Natural killer cell (primary cell): ENCODE measurements at regions of chr11 and their contacts with region 1.

Region 1: DNA sequence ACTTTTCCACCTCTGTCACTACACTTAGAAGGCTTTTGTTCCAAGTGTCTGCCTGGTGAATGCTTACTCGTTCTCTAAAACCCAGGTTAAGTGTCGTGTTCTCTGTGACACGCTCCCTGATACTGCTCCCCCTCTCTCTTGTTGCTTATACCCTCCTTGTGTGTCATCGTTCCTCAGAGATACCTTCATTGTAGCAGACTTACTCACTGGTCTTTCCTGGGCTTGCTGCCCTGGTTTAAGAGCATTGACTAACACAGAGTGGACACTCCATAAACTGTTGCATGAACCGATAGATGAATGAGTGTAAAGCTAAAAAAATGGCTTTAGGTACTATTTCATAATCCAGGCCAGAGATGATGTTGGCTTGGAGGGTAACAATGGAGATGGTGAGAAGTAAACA is 171.3 kb downstream of the GRIK4 start:
- DNase-seq: no peak
- ATAC-seq: no peak
- H3K4me3 ChIP-seq: no peak overlapping the region
- H3K4me3 Mint-ChIP-seq: no peak overlapping the region
- H3K27ac ChIP-seq: no peak overlapping the region
- H3K27ac Mint-ChIP-seq: no peak overlapping the region
- H3K4me1 ChIP-seq: peaks cover 4% of the 10 kb centered on the region
- H3K4me1 Mint-ChIP-seq: peaks cover 8 to 30% of the 10 kb centered on the region in 2 donors
- H3K27me3 ChIP-seq: no peaks in the 10 kb centered on the region
- H3K27me3 Mint-ChIP-seq: no peaks in the 10 kb centered on the region
- CTCF ChIP-seq: no peak

Region 2: DNA sequence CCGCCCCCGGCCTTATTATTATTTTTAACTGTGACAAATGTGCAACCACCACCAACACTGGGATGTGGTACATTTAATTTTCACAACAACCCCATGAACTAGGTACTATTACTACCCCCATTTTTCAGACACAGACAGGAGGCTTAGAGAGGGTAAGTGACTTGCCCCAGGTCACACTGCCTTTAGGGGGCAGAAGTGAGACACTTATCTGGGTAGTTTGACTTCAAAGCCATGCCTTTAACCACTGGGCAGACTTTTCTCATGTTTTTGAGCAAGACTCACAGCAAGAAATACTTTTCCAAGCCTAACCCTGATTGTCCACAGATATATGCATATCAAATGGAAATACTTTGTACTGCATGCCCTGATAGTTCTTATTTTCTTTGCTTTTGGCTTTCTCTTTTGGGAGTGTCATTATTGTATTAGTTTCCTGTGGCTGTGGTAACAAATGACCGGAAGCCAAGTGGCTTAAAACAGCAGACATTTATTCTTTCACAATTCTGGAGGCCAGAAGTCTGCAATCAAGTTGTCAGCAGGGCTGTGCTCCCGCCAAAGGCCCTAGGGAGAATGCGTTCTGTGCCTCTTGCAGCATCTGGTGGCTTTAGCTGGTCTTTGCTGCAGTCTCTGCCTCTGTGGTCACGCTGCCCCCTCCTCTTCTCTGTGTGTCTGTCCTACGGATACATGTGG is 60.5 kb before region 1 on chr11:
- intact Hi-C with region 1: loop called (anchors 2 kb)
- DNase-seq: no peak
- ATAC-seq: peak in 2 of 3 donors; percentile 43 to 69
- H3K4me3 ChIP-seq: no peak overlapping the region
- H3K4me3 Mint-ChIP-seq: no peak overlapping the region
- H3K27ac ChIP-seq: no peak overlapping the region
- H3K27ac Mint-ChIP-seq: peak overlapping the region in 1 of 2 donors; percentile 62
- H3K4me1 ChIP-seq: peaks cover 4% of the 10 kb centered on the region
- H3K4me1 Mint-ChIP-seq: peaks cover 7 to 23% of the 10 kb centered on the region in 2 donors
- H3K27me3 ChIP-seq: no peaks in the 10 kb centered on the region
- H3K27me3 Mint-ChIP-seq: no peaks in the 10 kb centered on the region
- CTCF ChIP-seq: peak; percentile 31

Region 3: DNA sequence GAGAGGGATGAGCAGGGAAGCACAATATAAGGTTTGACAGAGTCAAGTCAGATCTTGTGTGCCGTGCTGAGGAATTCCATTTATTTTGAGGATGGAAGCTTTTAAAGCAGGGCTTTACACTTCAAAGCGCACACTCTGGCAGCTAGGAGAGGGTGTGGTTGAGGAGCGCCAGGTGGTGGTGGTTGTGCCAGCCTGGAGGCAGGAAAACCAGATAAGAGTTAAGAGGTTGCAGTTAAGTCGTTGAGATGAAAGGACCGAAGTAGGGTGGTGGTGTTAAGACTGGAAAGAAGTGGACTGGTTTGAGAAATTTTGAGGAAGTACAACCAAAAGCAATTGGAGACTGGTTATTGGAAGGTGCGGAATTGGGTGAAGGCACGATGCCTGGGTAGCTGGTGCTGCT is 109.4 kb after region 1 on chr11:
- intact Hi-C with region 1: loop called (anchors 10 kb)
- DNase-seq: no peak
- ATAC-seq: no peak
- H3K4me3 ChIP-seq: no peak overlapping the region
- H3K4me3 Mint-ChIP-seq: no peak overlapping the region
- H3K27ac ChIP-seq: no peak overlapping the region
- H3K27ac Mint-ChIP-seq: no peak overlapping the region
- H3K4me1 ChIP-seq: peaks cover 36% of the 10 kb centered on the region
- H3K4me1 Mint-ChIP-seq: peaks cover 0 to 10% of the 10 kb centered on the region in 2 donors
- H3K27me3 ChIP-seq: peaks cover 12% of the 10 kb centered on the region
- H3K27me3 Mint-ChIP-seq: no peaks in the 10 kb centered on the region
- CTCF ChIP-seq: no peak

Region 4: DNA sequence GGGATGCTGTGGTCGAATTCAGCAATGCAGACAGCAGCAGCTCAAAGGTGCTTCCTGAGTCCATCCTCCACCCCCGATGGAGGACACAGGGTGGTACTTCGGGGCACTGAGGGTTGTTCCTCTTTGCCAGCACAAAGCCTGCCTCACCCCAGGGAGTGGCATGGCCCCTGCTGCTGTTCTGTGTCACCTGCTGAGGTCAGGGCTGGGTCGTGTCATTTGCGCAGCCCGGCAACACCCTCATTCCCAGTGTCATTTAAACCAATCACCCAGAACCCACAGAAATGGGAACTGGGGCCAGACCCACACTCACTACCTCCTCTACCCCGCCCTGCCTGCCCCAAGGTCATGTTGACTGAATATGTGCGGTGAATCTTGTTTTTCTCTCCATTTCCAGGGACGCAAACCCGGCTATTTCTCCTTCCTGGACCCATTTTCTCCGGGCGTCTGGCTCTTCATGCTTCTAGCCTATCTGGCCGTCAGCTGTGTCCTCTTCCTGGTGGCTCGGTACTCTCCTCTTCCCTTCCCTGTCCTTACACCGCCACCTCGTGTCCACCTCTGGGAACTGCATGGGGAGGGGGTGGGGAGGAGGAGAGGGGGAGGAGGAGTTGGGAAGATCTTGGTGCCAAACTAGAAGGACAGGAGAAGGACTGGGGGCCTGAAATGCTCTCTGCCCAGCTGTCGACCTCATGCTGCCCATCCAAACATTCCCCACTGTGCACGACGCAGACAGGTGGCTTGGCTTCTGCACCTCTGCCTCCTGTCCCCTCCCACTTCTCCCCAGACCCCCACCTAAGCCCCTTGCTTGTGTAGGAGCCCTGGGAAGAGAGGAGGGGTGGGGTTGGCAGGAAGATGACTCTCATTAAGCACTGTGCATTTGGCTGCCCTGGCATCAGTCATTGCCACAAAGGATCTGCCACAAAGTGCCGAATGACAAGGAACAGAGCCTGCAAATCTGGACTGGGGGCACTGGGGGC is 269.9 kb after region 1 on chr11:
- intact Hi-C with region 1: loop called (anchors 10 kb)
- DNase-seq: peak; percentile 66 to 69
- ATAC-seq: peak; percentile 65 to 87 (median 76)
- H3K4me3 ChIP-seq: peak overlapping the region; percentile 15
- H3K4me3 Mint-ChIP-seq: peak overlapping the region; percentile 92
- H3K27ac ChIP-seq: peak overlapping the region; percentile 62
- H3K27ac Mint-ChIP-seq: peak overlapping the region; percentile 29 to 93
- H3K4me1 ChIP-seq: peaks cover 32% of the 10 kb centered on the region
- H3K4me1 Mint-ChIP-seq: peaks cover 29 to 60% of the 10 kb centered on the region in 2 donors
- H3K27me3 ChIP-seq: peaks cover 2% of the 10 kb centered on the region
- H3K27me3 Mint-ChIP-seq: peaks cover 0 to 15% of the 10 kb centered on the region in 2 donors
- CTCF ChIP-seq: peak; percentile 59